ENCODE measurements at regions of chr15 and their contacts with region 1.

Region 1: DNA sequence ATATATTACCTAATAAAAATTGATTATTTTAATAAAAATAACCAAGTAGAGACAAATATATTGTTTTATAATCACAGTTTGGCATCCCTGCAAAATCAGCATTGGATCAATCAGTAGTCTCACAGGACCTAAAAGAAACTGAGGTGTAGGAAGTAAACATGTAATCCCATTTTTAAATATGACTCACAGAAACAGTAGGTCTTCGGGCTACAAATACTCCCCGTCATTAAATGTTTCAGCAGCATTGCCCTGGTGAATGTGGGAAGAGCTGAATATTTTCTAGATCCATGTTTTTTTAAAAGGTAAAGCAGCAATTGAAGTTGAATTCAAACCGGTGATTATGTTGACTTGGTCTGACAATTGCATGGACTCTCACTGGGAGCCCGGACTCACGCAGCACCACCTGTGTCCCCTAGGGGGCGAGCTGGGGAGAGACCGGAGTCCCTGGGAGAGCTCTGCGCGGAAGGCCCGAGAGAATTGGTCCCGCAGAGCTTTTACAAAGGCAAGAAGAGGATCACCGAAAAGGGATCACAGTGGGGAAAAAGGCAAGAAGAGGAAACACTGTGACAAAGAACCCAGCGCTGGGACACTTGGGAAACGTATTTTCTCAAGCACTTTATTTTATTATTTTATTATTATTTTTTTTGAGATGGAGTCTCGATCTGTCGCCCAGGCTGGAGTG is 17.2 kb upstream of the USP3 start:
- DNase-seq: peak; percentile 91
- H3K4me3 Mint-ChIP-seq: no peak overlapping the region
- H3K27ac Mint-ChIP-seq: peak overlapping the region; percentile 80
- H3K4me1 Mint-ChIP-seq: peaks cover 80% of the 10 kb centered on the region
- H3K27me3 Mint-ChIP-seq: no peaks in the 10 kb centered on the region

Region 2: DNA sequence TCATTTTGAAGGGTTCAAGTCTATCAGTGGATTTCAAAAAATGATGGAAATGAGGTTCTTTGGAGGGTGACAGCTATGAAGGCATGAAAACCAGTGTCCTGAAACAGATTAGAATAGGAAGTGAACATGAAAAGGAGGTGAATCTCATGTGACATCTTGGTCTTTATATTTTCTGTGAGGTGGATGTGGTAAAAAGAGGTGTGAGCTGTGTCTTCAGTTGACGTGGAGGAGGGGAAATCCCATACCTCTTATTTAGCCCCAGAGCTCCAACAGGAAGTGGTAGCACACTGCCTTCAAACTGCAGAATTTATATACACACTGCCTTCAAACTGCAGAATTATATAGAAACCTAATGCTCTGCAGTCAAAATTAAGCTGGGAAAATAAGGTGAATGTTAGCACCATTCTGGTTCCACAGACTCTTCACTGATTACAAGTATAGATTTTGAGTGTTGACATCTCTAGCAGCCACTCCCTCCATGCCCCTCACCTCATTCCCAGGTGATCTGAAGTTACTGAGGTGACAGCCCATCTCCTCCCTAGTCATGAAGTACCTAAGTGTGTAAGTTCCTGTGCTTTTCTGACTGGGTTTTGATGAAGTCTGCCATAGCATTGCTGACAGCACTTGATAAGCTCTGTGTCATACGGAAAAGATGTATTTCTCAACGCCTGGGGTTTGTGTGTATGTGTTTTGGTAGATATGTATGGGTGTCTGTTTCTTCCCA is 295.2 kb before region 1 on chr15:
- CTCF ChIA-PET with region 1: no interaction called
- DNase-seq: peak; percentile 70
- H3K4me3 Mint-ChIP-seq: peak overlapping the region; percentile 93
- H3K27ac Mint-ChIP-seq: peak overlapping the region; percentile 94
- H3K4me1 Mint-ChIP-seq: peaks cover 72% of the 10 kb centered on the region
- H3K27me3 Mint-ChIP-seq: peaks cover 3% of the 10 kb centered on the region

Region 3: DNA sequence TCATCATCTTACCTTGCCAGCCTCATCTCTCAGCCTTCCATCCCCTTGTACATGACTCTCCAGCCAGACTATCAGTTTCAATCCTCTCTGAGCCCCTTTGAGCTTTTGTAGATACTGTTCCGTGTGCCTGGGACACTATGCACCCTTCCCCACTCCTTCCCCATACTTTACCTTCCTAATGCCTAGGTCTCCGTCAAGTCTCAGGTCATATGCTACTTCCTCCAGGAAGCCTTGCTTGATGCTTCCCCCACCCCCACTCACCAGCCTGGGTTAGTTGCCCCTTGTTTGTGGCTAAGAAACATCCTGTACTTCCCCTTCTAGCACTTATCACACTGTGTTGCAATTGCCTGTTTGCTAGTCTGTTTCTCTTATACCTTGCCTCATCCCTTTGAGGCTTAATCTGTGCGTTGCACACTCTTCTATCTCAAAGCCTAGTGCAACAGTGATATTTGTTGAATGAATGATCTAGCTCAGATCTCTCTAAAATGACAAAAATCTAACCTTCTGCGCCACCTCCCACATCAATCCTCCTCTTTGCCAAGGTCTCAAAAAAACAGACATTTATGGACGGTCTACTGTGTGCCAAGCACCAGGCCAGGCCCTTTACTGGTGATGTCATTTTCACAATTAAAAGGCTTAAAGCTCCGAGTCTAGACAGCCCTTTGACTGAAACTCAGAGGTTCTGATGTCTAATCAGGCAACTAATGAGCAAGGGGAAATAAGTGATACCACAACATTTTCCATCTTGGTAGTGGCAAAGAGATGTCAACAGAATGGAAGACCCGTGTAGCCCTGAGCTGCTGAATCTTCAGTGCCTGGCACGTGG is 10.6 kb after region 1 on chr15:
- CTCF ChIA-PET with region 1: interaction called, 82 read pairs
- DNase-seq: peak; percentile 81
- H3K4me3 Mint-ChIP-seq: no peak overlapping the region
- H3K27ac Mint-ChIP-seq: no peak overlapping the region
- H3K4me1 Mint-ChIP-seq: peaks cover 56% of the 10 kb centered on the region
- H3K27me3 Mint-ChIP-seq: no peaks in the 10 kb centered on the region

Region 4: DNA sequence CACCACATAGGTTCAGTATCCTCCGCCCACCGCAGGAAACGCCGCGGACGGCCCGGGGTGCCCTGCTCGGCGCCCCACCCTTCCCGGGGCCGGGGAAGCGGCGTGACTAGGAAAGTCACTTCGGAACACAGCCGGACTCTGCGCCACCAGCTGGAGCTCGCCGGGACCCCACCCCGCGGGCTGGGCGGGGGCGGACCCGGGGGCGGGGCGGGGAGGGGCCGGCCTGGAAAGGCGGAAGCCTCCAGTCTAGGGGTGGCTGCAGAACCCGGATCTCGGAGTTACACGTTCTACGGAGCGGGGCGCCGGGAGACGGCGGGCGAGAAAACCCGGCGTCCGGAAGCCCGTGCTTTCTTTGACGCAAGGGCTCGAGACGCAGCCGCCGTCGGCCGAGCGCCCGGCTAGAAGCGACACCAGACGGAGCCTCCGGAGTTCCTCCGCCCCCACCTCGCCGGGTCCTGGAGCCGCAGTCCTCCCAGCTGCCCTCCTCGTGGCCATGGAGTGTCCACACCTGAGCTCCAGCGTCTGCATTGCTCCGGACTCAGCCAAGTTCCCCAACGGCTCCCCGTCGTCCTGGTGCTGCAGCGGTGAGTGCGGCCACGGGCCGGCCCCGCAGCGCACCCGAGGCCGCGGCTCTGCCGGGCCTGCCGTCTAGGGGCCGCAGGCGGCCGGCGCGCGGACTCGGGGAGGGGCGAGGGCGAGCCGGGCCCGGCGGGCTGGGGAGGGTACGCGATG is 17.2 kb after region 1 on chr15 and contains the start of gene USP3:
- CTCF ChIA-PET with region 1: interaction called, 82 read pairs
- DNase-seq: peak; percentile 93
- H3K4me3 Mint-ChIP-seq: peak within 1 kb of the TSS; percentile 91
- H3K27ac Mint-ChIP-seq: peak within 1 kb of the TSS; percentile 99
- H3K4me1 Mint-ChIP-seq: peaks cover 76% of the 10 kb centered on the region
- H3K27me3 Mint-ChIP-seq: no peaks in the 10 kb centered on the region

Region 5: GRCh38 chr15:63600616-63601025 is 113.4 kb after region 1 on chr15:
- CTCF ChIA-PET with region 1: interaction called, 15 read pairs
- DNase-seq: peak; percentile 92
- H3K4me3 Mint-ChIP-seq: peak overlapping the region; percentile 91
- H3K27ac Mint-ChIP-seq: peak overlapping the region; percentile 97
- H3K4me1 Mint-ChIP-seq: peaks cover 61% of the 10 kb centered on the region
- H3K27me3 Mint-ChIP-seq: peaks cover 11% of the 10 kb centered on the region

Measured in activated naive CD4-positive, alpha-beta T cell treated with anti-CD3 and anti-CD28 coated beads, Interleukin-2, amount 10 ng/mL, durations not matched to agents 7 days and 5 days (primary cell).